Gastrocnemius medialis (tissue), 4 donors: ENCODE measurements at regions of chr7 and their contacts with region 1.

Region 1: DNA sequence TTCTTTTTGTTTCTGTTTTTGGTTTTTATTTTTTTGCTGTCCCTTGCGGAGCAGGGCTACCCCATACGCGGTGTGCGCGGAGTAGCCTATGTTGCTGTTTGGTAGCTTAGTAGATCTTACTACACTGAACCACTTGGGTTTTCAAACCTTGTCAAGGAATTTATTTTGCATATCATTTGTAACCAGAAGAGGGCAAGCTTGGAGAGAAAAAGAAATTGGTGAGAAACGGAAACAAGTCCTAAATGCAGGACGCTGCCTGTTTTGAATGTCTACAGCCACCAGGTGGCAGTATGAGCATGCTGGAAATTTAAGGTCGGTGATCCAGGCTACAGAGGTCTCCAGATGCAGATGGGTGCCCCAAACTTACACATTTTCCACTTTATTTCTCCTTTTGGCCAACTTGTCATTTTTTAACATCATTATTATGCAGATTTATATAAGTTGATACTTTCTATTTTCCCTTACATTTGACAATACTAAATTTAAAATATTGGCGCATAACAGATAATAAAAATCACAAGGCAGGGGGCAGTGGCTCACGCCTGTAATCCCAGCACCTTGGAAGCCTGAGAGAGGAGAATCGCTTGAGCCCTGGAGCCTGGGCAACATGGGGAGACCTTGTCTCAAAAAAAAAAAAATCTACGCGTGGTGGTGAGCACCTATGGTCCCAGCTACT is 15.3 kb upstream of the TRA2A start:
- DNase-seq: peak; percentile 23 to 65
- ATAC-seq: peak; percentile 88 to 92
- H3K4me3 ChIP-seq: no peak overlapping the region
- H3K27ac ChIP-seq: no peak overlapping the region
- H3K4me1 ChIP-seq: no peaks in the 10 kb centered on the region
- H3K27me3 ChIP-seq: no peaks in the 10 kb centered on the region
- CTCF ChIP-seq: peak; percentile 74 to 93 (median 81)
- POLR2A ChIP-seq: no peak

Region 2: DNA sequence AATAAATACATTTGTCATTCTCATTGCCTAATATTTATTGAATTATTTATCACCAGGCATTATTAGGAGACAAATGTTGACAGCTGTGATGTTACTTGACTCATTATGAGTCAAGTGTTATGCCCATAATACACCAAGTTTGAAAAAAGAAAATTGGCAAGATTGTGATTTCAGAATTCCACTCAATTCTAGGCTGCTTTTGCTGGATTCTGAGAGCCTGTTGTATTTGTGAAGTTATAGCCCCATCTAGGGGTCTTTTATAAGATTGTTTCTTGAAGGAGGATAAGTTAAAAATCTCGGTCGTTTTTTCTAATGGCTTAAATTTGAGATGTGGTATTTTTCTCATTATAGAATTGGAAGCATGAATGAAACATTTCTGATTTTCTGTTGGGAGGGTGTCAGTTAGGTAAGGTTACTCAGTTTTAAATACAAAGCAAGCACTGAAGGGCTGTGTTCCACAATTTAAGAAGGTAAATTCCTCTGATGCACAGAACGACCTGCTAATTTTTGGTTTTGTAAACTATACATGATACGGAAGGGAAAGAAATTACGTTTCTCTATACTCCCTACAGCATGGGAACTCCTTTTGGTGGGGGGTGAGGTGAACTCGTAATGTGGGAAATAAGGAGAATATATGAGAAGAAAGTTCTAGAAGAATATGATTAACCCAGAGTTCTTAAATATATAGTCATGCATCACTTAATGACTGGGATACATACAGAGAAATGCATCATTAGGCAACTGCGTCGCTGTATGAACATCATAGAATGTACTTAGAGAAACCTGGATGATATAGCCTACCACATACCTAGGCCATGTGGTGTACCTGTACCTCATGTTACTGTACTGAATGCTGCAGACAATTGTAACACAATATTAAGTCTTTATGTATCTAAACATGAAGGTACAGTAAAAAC is 165.6 kb after region 1 on chr7:
- in situ Hi-C with region 1: no loop called
- intact Hi-C with region 1: loop called (anchors 1 kb)
- DNase-seq: no peak
- ATAC-seq: peak; percentile 65 to 68
- H3K4me3 ChIP-seq: no peak overlapping the region
- H3K27ac ChIP-seq: no peak overlapping the region
- H3K4me1 ChIP-seq: no peaks in the 10 kb centered on the region
- H3K27me3 ChIP-seq: no peaks in the 10 kb centered on the region
- CTCF ChIP-seq: peak; percentile 53 to 70 (median 68)
- POLR2A ChIP-seq: no peak

Region 3: DNA sequence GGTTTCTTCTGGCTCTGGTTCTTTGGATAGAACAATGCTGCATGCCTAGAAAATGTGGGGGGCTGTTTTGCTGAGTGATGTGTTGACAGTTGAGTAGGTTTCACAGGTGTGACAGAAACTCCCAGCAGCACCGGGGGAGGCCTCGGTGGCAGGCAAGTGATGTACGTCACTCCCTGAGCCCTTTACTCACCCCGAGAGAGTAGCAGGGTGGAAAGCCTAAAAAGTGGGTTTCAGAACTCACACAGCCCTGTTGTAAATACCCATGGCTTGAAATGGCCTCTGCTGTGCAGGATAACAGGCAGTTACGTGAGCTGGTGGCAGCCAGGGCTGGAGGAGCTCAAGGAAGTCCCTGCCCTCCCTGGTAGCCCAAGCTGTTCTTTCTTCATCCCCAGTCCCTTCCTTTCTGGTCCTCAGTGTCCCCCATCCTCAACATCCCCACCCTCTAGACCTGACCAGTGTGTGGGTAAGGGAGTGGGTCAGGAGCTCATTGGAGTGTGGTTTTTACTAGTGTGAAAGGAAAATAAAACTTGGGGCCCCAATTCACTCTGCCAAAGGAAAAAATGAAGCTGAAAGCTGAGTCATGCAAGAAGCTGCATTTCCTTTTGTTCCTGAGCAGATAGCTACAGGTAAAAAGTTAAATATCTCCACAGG is 421.0 kb after region 1 on chr7:
- in situ Hi-C with region 1: no loop called
- intact Hi-C with region 1: no loop called
- DNase-seq: no peak
- ATAC-seq: no peak
- H3K4me3 ChIP-seq: no peak overlapping the region
- H3K27ac ChIP-seq: no peak overlapping the region
- H3K4me1 ChIP-seq: no peaks in the 10 kb centered on the region
- H3K27me3 ChIP-seq: no peaks in the 10 kb centered on the region
- CTCF ChIP-seq: no peak
- POLR2A ChIP-seq: no peak